Heart left ventricle (tissue), 16 donors: ENCODE measurements at regions of chr15 and their contacts with region 1.

Region 1: DNA sequence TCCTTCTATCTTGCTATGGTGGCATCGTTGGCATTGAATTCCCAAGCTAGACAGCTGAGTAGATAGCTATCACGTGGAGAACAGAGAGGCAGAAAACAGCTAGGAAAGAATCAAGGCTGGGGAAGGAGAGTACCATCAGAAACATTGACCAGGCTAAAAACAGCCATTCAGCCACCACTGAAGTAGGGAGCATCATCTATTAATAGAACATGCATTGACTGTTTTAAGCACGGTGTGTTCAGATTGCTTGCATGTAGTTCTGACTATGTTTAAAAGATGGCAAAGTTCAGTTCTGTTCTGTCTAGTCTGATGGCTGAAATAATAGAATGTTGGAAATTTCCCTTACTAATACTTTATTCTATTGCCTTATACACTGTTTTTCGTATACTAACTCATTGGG is 413.0 kb downstream of the GABRB3 start:
- DNase-seq: no peak
- ATAC-seq: peak; percentile 84 to 93 (median 90)
- H3K4me3 ChIP-seq: no peak overlapping the region
- H3K27ac ChIP-seq: peak overlapping the region in 6 of 12 donors; percentile 22 to 58 (median 30)
- H3K4me1 ChIP-seq: peaks cover 0 to 8% (median 0%) of the 10 kb centered on the region in 12 donors
- H3K27me3 ChIP-seq: no peaks in the 10 kb centered on the region
- CTCF ChIP-seq: no peak
- POLR2A ChIP-seq: no peak

Region 2: DNA sequence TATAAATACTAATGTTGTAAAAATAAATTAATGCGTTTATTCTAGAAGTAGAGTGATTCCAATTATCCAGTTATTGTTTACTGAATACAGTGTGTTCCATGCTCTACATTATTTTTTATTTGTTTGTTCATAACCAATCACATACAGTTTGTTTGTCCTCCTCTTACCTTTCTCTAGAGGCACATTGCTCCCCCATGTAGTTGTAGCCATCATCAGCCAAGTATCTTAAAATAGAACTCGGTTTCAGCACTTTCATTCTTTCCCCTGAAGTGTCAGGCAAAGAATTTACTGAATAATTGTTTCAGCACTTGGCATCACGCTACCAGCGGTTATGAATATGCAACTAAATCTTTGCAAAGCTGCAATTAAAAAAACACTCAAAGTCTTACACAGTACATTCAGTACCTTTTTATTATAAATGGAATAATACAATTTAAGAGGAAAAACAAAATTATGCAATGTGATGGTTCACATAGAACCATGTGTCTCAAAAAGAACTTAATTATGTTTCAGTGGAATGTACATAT is 48.1 kb before region 1 on chr15:
- intact Hi-C with region 1: loop called in 1 of 10 experiments (anchors 10 kb)
- DNase-seq: no peak
- ATAC-seq: peak in 3 of 4 donors; percentile 59 to 66 (median 64)
- H3K4me3 ChIP-seq: no peak overlapping the region
- H3K27ac ChIP-seq: no peak overlapping the region
- H3K4me1 ChIP-seq: peaks cover 0 to 6% (median 0%) of the 10 kb centered on the region in 12 donors
- H3K27me3 ChIP-seq: no peaks in the 10 kb centered on the region
- CTCF ChIP-seq: no peak
- POLR2A ChIP-seq: no peak

Region 3: GRCh38 chr15:26325495-26325894 is 34.4 kb before region 1 on chr15:
- intact Hi-C with region 1: no loop called
- DNase-seq: no peak
- ATAC-seq: no peak
- H3K4me3 ChIP-seq: no peak overlapping the region
- H3K27ac ChIP-seq: no peak overlapping the region
- H3K4me1 ChIP-seq: no peaks in the 10 kb centered on the region
- H3K27me3 ChIP-seq: no peaks in the 10 kb centered on the region
- CTCF ChIP-seq: no peak
- POLR2A ChIP-seq: no peak